Ovary (tissue), 10 donors: ENCODE measurements at regions of chr2 and their contacts with region 1.

Region 1: GRCh38 chr2:62705007-62705829 is at the start of gene EHBP1:
- DNase-seq: peak; percentile 99 to 100 (median 100)
- H3K4me3 ChIP-seq: peak within 1 kb of the TSS; percentile 98
- H3K27ac ChIP-seq: peak within 1 kb of the TSS; percentile 93 to 97
- H3K4me1 ChIP-seq: peaks cover 6% of the 10 kb centered on the region
- H3K27me3 ChIP-seq: no peaks in the 10 kb centered on the region
- CTCF ChIP-seq: no peak
- EP300 ChIP-seq: peak; percentile 47
- POLR2A ChIP-seq: peak; percentile 60
- total RNA-seq, gene EHBP1: 56.3 to 185 (median 138) TPM

Region 2: GRCh38 chr2:62505750-62506420 is 199.3 kb before region 1 on chr2 and contains the start of gene TMEM17:
- intact Hi-C with region 1: loop called in 1 of 4 experiments (anchors 10 kb)
- DNase-seq: peak; percentile 95 to 97 (median 96)
- H3K4me3 ChIP-seq: peak within 1 kb of the TSS; percentile 68
- H3K27ac ChIP-seq: peak within 1 kb of the TSS; percentile 84 to 91
- H3K4me1 ChIP-seq: peaks cover 1% of the 10 kb centered on the region
- H3K27me3 ChIP-seq: no peaks in the 10 kb centered on the region
- CTCF ChIP-seq: no peak
- EP300 ChIP-seq: no peak
- POLR2A ChIP-seq: peak; percentile 25
- total RNA-seq, gene TMEM17: 0.94 to 2.5 (median 2.1) TPM